ENCODE measurements at regions of chr6 and their contacts with region 1.

Region 1: GRCh38 chr6:2791124-2791974 is 26.2 kb downstream of the WRNIP1 start:
- DNase-seq: peak; percentile 81
- ATAC-seq: peak; percentile 94
- H3K4me3 ChIP-seq: no peak overlapping the region
- H3K27ac ChIP-seq: no peak overlapping the region
- H3K4me1 ChIP-seq: peaks cover 9% of the 10 kb centered on the region; the same call in 1 of the 2 replicates
- H3K27me3 ChIP-seq: no peaks in the 10 kb centered on the region
- CTCF ChIP-seq: peak; percentile 94
- EP300 ChIP-seq: 0 out of 4 replicates have a peak, but pooled peaks of 1 of the 2 experiments have one; percentile 11
- POLR2A ChIP-seq: no peak
- RAD21 ChIP-seq: peak; percentile 96

Region 2: DNA sequence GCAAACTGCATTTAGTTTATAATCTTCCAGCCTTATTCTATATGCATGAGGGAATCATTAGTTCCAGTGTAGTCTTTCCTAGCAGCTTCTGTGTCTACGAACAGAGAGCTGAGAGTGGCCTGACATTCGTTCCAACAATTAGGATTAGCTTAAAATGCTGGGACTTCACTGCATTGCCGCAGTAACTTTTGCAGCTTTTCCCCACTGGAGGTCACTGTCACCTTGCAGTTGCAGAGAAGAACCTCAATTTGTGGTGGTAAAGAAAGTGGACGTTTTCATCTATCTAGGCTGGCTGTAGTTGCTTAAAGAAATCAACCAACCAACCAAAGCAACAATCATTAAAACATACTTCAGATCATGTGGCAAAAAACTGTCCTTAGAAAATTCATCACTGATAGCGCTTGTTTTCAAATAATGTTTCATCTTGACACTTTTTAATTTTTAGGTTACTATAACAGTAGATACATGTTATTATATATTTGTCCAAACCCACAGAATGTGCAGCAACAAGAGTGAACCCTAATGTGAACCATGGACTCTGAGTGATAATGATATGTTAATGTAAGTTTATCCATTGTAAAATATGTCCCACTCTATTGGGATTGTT is 52.9 kb before region 1 on chr6:
- CTCF ChIA-PET with region 1: no interaction called
- POLR2A ChIA-PET with region 1: no interaction called
- in situ Hi-C with region 1: no loop called
- intact Hi-C with region 1: loop called (anchors 2 kb)
- DNase-seq: peak; percentile 47
- ATAC-seq: peak; percentile 81
- H3K4me3 ChIP-seq: no peak overlapping the region
- H3K27ac ChIP-seq: no peak overlapping the region
- H3K4me1 ChIP-seq: peaks cover 27% of the 10 kb centered on the region
- H3K27me3 ChIP-seq: 0 out of 5 replicates have a peak, but pooled peaks cover 0 to 4% of the 10 kb centered on the region in 2 experiments
- CTCF ChIP-seq: peak; percentile 94
- EP300 ChIP-seq: no peak
- POLR2A ChIP-seq: no peak
- RAD21 ChIP-seq: peak; percentile 86

Region 3: DNA sequence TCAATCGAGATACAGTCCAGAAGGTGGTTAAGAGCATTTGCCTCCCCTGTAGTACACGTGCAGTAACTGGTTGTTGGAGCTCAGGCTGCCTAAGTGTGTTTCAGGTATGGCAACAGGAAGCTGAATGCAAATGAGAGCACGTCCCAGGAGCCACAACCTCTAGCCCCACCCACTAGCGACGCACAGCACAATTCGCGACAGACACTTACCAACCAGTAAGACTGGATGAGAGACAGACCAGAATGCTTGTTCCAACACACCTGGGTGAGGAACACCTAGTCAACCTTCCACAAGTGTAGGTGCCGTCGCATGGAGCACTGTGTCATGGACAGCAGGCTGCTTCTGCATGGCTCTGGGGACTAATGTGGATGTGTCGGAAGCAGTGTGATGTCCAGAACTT is 57.5 kb after region 1 on chr6:
- CTCF ChIA-PET with region 1: interaction called, 14 read pairs
- POLR2A ChIA-PET with region 1: interaction called, 12 read pairs
- in situ Hi-C with region 1: loop called (anchors 5 kb)
- intact Hi-C with region 1: loop called (anchors 1 kb)
- DNase-seq: no peak
- ATAC-seq: no peak
- H3K4me3 ChIP-seq: no peak overlapping the region
- H3K27ac ChIP-seq: no peak overlapping the region
- H3K4me1 ChIP-seq: peaks cover 63% of the 10 kb centered on the region
- H3K27me3 ChIP-seq: no peaks in the 10 kb centered on the region
- CTCF ChIP-seq: no peak
- EP300 ChIP-seq: no peak
- POLR2A ChIP-seq: no peak
- RAD21 ChIP-seq: no peak

Region 4: DNA sequence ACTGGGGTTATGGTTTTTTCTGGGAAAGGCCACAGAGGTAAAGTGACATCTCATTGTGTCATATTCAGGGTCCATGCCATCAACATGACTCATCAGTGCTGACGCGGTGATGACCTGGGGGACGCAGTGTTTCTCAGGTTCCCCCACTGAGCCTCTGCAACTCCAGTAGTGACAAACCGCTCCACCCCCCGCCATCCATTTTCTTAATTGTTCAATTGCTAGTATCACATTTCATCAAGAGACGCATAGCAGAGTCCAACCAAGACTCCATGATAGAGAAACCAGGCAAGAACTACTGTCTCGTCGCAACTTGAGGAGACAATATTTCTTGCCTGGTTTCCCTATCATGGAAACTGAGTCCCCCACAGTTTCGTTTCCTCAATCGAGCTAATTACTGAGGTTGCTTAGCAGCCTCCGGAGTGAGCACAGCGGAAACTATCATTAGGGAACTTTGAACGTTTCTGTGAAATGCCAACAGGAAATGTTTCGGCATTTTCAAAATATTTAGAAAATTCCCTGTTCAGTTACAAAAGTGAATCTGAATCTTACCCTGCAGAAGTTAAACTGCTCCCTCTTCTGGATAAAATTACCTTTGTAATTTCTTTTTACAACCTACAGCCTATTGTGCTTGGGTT is 62.5 kb after region 1 on chr6:
- CTCF ChIA-PET with region 1: interaction called, 14 read pairs
- POLR2A ChIA-PET with region 1: interaction called, 3 read pairs
- in situ Hi-C with region 1: no loop called
- intact Hi-C with region 1: loop called (anchors 1 kb)
- DNase-seq: peak; percentile 75
- ATAC-seq: peak; percentile 47
- H3K4me3 ChIP-seq: peak overlapping the region; percentile 51 to 60 (median 53)
- H3K27ac ChIP-seq: peak overlapping the region; percentile 65
- H3K4me1 ChIP-seq: peaks cover 91% of the 10 kb centered on the region
- H3K27me3 ChIP-seq: no peaks in the 10 kb centered on the region
- CTCF ChIP-seq: peak; percentile 53; the same call in 1 of the 2 replicates
- EP300 ChIP-seq: peak in 1 of 2 experiments; percentile 8; a peak in 1 of 4 replicates
- POLR2A ChIP-seq: 0 out of 4 replicates have a peak, but pooled peaks of 1 of the 2 experiments have one; percentile 22
- RAD21 ChIP-seq: no peak; the same call in 1 of the 2 replicates

Region 5: DNA sequence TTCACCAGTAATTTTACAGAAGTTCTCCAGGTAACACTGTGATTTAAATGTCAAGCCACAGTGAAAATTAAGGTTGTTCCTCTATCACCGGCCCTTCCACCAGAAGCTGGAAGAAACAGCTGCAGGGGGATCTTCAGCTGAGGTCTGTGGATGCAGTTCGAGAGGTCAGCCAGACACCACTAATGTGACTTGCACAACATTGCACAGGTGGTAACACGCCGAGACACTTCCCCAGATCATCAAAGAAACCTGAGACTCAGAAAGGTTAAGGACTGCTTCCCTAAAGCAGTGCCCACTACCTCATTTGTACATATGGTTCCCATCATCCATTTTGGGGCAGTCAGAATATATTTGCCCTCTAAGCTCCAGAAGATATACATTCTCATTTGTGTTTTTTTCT is 119.8 kb after region 1 on chr6:
- CTCF ChIA-PET with region 1: interaction called, 21 read pairs
- POLR2A ChIA-PET with region 1: no interaction called
- in situ Hi-C with region 1: loop called (anchors 5 kb)
- intact Hi-C with region 1: loop called (anchors 1 kb)
- DNase-seq: no peak
- ATAC-seq: no peak
- H3K4me3 ChIP-seq: no peak overlapping the region
- H3K27ac ChIP-seq: no peak overlapping the region
- H3K4me1 ChIP-seq: peaks cover 35% of the 10 kb centered on the region
- H3K27me3 ChIP-seq: peaks cover 0 to 20% of the 10 kb centered on the region in 2 experiments; a peak in 4 of 5 replicates
- CTCF ChIP-seq: no peak
- EP300 ChIP-seq: no peak
- POLR2A ChIP-seq: no peak
- RAD21 ChIP-seq: no peak

Region 6: GRCh38 chr6:2931970-2932748 is 140.8 kb after region 1 on chr6:
- CTCF ChIA-PET with region 1: interaction called, 57 read pairs
- POLR2A ChIA-PET with region 1: interaction called, 5 read pairs
- in situ Hi-C with region 1: no loop called
- intact Hi-C with region 1: loop called (anchors 1 kb)
- DNase-seq: peak; percentile 85
- ATAC-seq: peak; percentile 99
- H3K4me3 ChIP-seq: peak overlapping the region in 1 of 3 experiments; percentile 63; a peak in 2 of 6 replicates
- H3K27ac ChIP-seq: no peak overlapping the region
- H3K4me1 ChIP-seq: peaks cover 10% of the 10 kb centered on the region
- H3K27me3 ChIP-seq: peaks cover 0 to 3% of the 10 kb centered on the region in 2 experiments; a peak in 2 of 5 replicates
- CTCF ChIP-seq: peak; percentile 99
- EP300 ChIP-seq: no peak
- POLR2A ChIP-seq: no peak
- RAD21 ChIP-seq: peak; percentile 96